B cell (primary cell): ENCODE measurements at regions of chr3 and their contacts with region 1.

Region 1: DNA sequence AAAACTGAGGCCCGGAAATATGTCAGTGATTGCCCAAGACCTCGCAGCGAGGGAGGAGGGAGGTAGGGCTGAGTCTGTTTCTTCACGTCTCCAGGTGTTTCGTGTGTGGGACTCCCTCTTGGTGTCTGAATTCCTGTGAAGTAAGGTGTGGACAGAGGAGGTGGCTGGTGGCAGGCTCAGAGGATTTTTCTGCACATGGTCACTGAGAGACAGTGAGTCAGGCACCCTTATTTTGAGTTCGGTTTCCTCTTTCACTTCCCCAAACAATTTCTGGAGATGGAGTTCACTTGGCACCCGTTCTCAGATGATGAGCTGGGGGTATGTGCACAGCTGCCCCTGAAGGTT is 46.3 kb upstream of the VPS8 start:
- DNase-seq: peak; percentile 75
- ATAC-seq: peak; percentile 88
- H3K4me3 ChIP-seq: no peak overlapping the region
- H3K4me3 Mint-ChIP-seq: peak overlapping the region; percentile 18
- H3K27ac ChIP-seq: no peak overlapping the region
- H3K27ac Mint-ChIP-seq: peak overlapping the region; percentile 1
- H3K4me1 ChIP-seq: peaks cover 22 to 25% of the 10 kb centered on the region in 2 donors
- H3K4me1 Mint-ChIP-seq: peaks cover 26% of the 10 kb centered on the region
- H3K27me3 ChIP-seq: no peaks in the 10 kb centered on the region
- H3K27me3 Mint-ChIP-seq: peaks cover 7% of the 10 kb centered on the region
- CTCF ChIP-seq: no peak

Region 2: GRCh38 chr3:184777336-184778004 is 11.8 kb after region 1 on chr3:
- CTCF ChIA-PET with region 1: interaction called, 18 read pairs
- POLR2A ChIA-PET with region 1: no interaction called
- intact Hi-C with region 1: no loop called
- DNase-seq: peak; percentile 90
- ATAC-seq: peak; percentile 98
- H3K4me3 ChIP-seq: no peak overlapping the region
- H3K4me3 Mint-ChIP-seq: no peak overlapping the region
- H3K27ac ChIP-seq: no peak overlapping the region
- H3K27ac Mint-ChIP-seq: no peak overlapping the region
- H3K4me1 ChIP-seq: no peaks in the 10 kb centered on the region
- H3K4me1 Mint-ChIP-seq: no peaks in the 10 kb centered on the region
- H3K27me3 ChIP-seq: peaks cover 0 to 15% (median 0%) of the 10 kb centered on the region in 4 experiments
- H3K27me3 Mint-ChIP-seq: peaks cover 33% of the 10 kb centered on the region
- CTCF ChIP-seq: peak; percentile 79

Region 3: DNA sequence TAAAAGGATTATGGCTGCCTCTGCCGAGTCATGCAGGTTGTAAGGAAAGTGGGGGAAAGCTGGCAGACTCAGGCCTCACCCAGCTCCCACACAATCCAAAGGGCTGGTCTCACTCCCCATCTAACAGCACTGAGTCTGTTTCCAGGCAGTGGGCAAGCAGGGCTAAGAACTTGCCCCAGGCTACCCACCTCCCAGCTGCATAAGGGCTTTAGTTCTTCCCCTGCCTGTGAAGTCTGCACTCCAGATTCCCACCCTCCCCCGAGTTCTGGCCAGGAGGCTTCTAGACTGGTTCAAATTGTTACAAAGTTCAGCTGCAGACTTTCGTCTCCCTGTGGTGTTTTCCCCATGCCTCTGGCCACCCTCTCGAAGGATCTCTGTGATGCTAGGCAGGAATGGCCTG is 476.9 kb after region 1 on chr3:
- CTCF ChIA-PET with region 1: no interaction called
- POLR2A ChIA-PET with region 1: no interaction called
- intact Hi-C with region 1: no loop called
- DNase-seq: no peak
- ATAC-seq: no peak
- H3K4me3 ChIP-seq: no peak overlapping the region
- H3K4me3 Mint-ChIP-seq: no peak overlapping the region
- H3K27ac ChIP-seq: no peak overlapping the region
- H3K27ac Mint-ChIP-seq: no peak overlapping the region
- H3K4me1 ChIP-seq: no peaks in the 10 kb centered on the region
- H3K4me1 Mint-ChIP-seq: no peaks in the 10 kb centered on the region
- H3K27me3 ChIP-seq: no peaks in the 10 kb centered on the region
- H3K27me3 Mint-ChIP-seq: peaks cover 17% of the 10 kb centered on the region
- CTCF ChIP-seq: no peak